ENCODE measurements at regions of chr2 and their contacts with region 1.

Region 1: GRCh38 chr2:165471349-165471950 is 2.0 kb downstream of the CSRNP3 start:
- DNase-seq: no peak
- ATAC-seq: peak in 4 of 8 donors; percentile 39 to 54 (median 46)
- H3K4me3 ChIP-seq: peak overlapping the region in 5 of 10 donors; percentile 5 to 18 (median 10)
- H3K27ac ChIP-seq: no peak overlapping the region
- H3K4me1 ChIP-seq: peaks cover 0 to 38% (median 16%) of the 10 kb centered on the region in 9 donors
- H3K27me3 ChIP-seq: no peaks in the 10 kb centered on the region
- CTCF ChIP-seq: no peak

Region 2: DNA sequence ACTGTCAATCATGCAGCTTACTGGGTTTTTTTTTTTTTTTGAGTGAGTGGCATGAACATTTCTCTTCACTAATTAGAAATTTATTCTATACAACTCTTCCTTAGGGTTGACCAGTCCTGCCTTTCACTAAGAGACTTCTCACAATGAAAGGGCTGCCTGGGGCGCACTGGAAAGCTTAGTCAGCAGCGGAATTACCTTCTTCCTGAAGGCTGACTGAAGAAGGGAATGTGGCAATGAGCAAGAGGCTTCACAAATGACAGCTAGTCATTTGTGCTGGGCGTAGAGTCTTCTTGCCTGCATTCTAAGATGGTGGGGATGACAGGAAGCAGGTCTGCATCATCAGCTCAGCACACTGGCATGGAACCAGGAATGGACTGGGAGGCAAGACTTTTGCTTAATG is 252.0 kb before region 1 on chr2:
- intact Hi-C with region 1: no loop called
- DNase-seq: no peak
- ATAC-seq: no peak
- H3K4me3 ChIP-seq: no peak overlapping the region
- H3K27ac ChIP-seq: no peak overlapping the region
- H3K4me1 ChIP-seq: no peaks in the 10 kb centered on the region
- H3K27me3 ChIP-seq: peaks cover 0 to 15% (median 0%) of the 10 kb centered on the region in 7 donors
- CTCF ChIP-seq: no peak

Region 3: GRCh38 chr2:165522719-165523118 is 51.3 kb after region 1 on chr2:
- intact Hi-C with region 1: no loop called
- DNase-seq: no peak
- ATAC-seq: no peak
- H3K4me3 ChIP-seq: no peak overlapping the region
- H3K27ac ChIP-seq: no peak overlapping the region
- H3K4me1 ChIP-seq: no peaks in the 10 kb centered on the region
- H3K27me3 ChIP-seq: no peaks in the 10 kb centered on the region
- CTCF ChIP-seq: no peak

Region 4: DNA sequence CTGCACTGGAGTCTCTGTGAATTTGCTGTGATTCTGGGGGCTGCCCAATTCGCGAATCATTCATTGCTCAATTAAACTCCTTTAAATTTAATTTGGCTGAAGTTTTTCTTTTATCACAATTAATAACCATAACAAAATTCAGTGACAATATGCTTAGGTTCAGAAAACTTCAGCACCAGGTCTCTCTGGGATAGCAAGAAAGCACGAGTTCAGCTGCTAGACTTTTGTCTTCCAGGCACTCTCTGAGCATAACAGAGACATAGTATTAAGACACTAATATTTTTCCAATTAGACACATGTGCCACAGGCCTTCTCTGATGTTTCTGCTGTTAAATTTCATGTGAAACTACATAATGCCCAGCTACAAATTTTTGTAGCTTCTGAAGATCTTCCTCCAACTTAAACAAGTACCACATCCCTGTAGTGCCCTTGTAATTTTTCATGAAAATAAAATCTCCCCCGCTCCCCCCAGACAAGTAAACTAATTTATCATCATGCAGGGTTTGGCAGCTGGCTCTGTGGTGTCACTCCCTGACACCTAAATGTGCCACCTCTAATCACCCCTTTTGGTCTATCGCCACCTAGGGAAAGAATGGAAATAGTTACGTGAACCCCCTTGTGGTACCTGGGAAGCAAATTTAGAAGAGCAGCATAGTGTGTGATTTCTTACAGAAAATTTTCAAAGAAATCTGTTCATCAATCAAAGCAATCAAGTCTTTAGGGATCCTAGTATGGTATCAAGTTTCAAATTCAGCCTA is 92.2 kb after region 1 on chr2:
- intact Hi-C with region 1: loop called in 1 of 10 experiments (anchors 10 kb)
- DNase-seq: no peak
- ATAC-seq: peak in 1 of 8 donors; percentile 54
- H3K4me3 ChIP-seq: no peak overlapping the region
- H3K27ac ChIP-seq: peak overlapping the region in 2 of 10 donors; percentile 42 to 49
- H3K4me1 ChIP-seq: peaks cover 0 to 9% (median 0%) of the 10 kb centered on the region in 9 donors
- H3K27me3 ChIP-seq: no peaks in the 10 kb centered on the region
- CTCF ChIP-seq: no peak